Esophagus squamous epithelium (tissue), 5 donors: ENCODE measurements at regions of chr11 and their contacts with region 1.

Region 1: GRCh38 chr11:16613512-16614381 is 124.7 kb upstream of the C11orf58 start:
- DNase-seq: no peak
- H3K4me3 ChIP-seq: peak overlapping the region; percentile 31 to 60 (median 52)
- H3K27ac ChIP-seq: peak overlapping the region in 2 of 4 donors; percentile 18 to 19
- H3K4me1 ChIP-seq: peaks cover 0 to 23% (median 7%) of the 10 kb centered on the region in 3 donors
- H3K27me3 ChIP-seq: peaks cover 4 to 96% (median 4%) of the 10 kb centered on the region in 4 donors
- CTCF ChIP-seq: peak; percentile 41 to 92 (median 82)
- POLR2A ChIP-seq: no peak

Region 2: DNA sequence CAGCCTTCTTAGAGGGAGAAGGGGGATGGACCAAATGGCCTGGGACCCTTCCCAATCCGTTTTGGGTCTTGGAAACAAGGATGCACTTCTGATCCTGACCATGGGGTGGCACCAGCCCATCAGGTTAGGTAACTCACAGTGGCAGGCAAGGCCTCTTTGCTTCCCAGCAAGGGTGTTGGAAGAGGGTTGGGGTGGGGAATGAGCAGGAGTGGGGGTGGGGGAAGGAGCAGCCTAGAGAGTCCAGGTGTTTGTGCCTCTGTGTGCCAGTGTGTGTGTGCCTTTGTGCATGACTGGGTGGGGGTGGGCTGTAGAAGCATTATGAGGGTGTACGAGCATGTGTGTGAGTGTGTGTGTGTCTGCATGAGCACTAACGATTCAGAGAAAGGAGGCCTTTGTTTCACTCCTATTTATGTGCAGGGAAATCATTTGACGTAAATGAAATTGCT is 1285.9 kb before region 1 on chr11:
- intact Hi-C with region 1: loop called (anchors 10 kb)
- DNase-seq: no peak
- H3K4me3 ChIP-seq: no peak overlapping the region
- H3K27ac ChIP-seq: no peak overlapping the region
- H3K4me1 ChIP-seq: no peaks in the 10 kb centered on the region
- H3K27me3 ChIP-seq: peaks cover 0 to 9% (median 0%) of the 10 kb centered on the region in 4 donors
- CTCF ChIP-seq: peak in 5 of 6 experiments; percentile 46 to 70 (median 49)
- POLR2A ChIP-seq: no peak

Region 3: DNA sequence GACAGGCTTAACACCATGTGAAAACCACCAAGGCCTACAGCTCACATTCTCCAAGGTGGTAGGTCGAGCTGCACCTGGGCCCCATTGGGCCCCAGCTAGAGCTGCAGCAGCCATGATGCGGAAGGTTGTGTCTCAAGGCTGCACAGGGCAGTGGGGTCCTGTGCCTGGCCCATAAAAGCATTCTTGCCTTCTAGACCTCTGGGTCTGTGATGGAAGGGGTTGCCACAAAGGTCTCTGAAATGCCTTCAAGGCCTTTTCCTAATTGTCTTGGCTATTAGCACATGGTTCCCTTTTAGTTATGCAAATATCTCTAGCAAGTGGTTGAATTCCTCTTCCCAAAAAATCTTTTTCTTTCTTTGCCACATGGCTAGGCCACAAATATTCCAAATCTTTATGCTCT is 72.2 kb after region 1 on chr11:
- intact Hi-C with region 1: no loop called
- DNase-seq: no peak
- H3K4me3 ChIP-seq: no peak overlapping the region
- H3K27ac ChIP-seq: no peak overlapping the region
- H3K4me1 ChIP-seq: no peaks in the 10 kb centered on the region
- H3K27me3 ChIP-seq: no peaks in the 10 kb centered on the region
- CTCF ChIP-seq: no peak
- POLR2A ChIP-seq: no peak